Right ventricle myocardium superior (tissue), 1 donor: ENCODE measurements at regions of chr11 and their contacts with region 1.

Region 1: GRCh38 chr11:14480716-14481115 is 18.9 kb downstream of the COPB1 start:
- DNase-seq: no peak
- ATAC-seq: no peak

Region 2: DNA sequence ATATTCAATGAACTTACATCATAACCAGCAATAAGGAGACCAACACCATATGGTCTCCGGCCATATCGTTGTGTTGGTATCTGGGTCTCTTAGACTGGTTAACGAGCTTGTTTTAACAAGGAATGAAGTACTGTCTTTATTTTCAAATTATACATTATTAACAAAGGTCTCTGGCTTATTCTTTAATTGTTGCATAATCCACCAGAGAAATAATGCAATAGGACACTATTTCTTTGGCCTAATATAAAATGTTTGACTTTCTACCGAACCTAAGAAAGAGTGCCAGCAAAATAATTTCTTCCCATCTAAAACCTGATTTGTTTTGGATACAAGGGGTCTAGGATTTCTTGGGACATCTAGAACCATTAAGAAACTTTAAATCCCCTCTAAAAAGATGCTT is 33.1 kb after region 1 on chr11:
- intact Hi-C with region 1: loop called (anchors 5 kb)
- DNase-seq: no peak
- ATAC-seq: no peak